ENCODE measurements at regions of chr10 and their contacts with region 1.

Region 1: DNA sequence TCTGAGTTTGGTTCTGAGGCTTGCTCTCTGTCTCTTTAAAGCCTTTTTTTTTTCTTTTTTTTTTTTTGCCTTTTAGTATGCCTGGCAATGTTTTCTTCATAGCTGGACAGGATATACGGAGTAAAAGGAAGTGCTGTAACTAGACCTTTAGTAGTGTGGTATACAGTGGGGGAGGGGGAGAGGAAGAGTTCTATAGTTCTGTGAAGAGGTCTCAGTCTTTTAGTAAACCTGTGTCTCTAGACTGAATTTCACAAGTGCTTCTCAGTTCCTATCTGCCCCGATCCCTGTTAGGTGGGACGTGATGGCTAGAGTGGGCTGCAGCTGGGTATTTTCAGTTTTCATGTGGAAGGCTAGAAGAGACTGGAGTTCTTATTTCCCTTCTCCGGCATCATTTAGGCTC is 3.1 kb upstream of the ABCC2 start:
- DNase-seq: no peak
- ATAC-seq: no peak
- H3K4me3 ChIP-seq: no peak overlapping the region
- H3K4me3 Mint-ChIP-seq: no peak overlapping the region
- H3K27ac ChIP-seq: no peak overlapping the region
- H3K27ac Mint-ChIP-seq: no peak overlapping the region
- H3K4me1 ChIP-seq: no peaks in the 10 kb centered on the region
- H3K4me1 Mint-ChIP-seq: peaks cover 6 to 11% (median 8%) of the 10 kb centered on the region in 3 donors
- H3K27me3 ChIP-seq: peaks cover 0 to 3% of the 10 kb centered on the region in 2 experiments
- H3K27me3 Mint-ChIP-seq: no peaks in the 10 kb centered on the region

Region 2: GRCh38 chr10:99754670-99755069 is 24.7 kb before region 1 on chr10:
- CTCF ChIA-PET with region 1: no interaction called
- POLR2A ChIA-PET with region 1: interaction called in 1 of 2 experiments, 12 read pairs
- DNase-seq: no peak
- ATAC-seq: no peak
- H3K4me3 ChIP-seq: no peak overlapping the region
- H3K4me3 Mint-ChIP-seq: no peak overlapping the region
- H3K27ac ChIP-seq: no peak overlapping the region
- H3K27ac Mint-ChIP-seq: no peak overlapping the region
- H3K4me1 ChIP-seq: no peaks in the 10 kb centered on the region
- H3K4me1 Mint-ChIP-seq: peaks cover 0 to 2% (median under 1%) of the 10 kb centered on the region in 3 donors
- H3K27me3 ChIP-seq: no peaks in the 10 kb centered on the region
- H3K27me3 Mint-ChIP-seq: no peaks in the 10 kb centered on the region